Gastrocnemius medialis (tissue), 4 donors: ENCODE measurements at regions of chr6 and their contacts with region 1.

Region 1: DNA sequence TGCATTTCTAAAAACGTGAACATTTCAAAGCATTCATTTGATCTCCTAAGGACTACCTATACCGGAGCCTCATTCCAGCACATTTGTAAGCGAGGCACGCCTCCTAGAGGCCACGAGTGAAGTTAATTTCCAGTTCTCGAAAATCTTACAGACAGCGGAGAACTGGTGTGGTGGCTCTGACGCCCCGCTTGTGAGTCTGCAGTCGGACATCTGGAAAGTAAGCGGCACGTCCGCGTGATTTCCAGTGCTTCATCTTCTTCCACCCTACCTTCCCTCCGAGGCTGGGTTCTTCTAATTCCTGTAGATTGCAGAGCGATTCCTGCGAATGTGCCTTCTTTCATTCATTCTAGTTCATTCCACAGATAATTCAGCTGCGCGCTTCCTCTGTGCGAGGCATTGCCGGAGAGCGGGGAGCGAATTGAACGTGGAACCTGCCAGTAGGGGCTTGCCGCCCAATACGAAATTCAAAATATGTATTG is 810 bp upstream of the PRIM2 start:
- DNase-seq: peak; percentile 51 to 75
- ATAC-seq: peak; percentile 88 to 96
- H3K4me3 ChIP-seq: peak overlapping the region; percentile 54 to 79 (median 68)
- H3K27ac ChIP-seq: peak overlapping the region; percentile 49 to 80 (median 58)
- H3K4me1 ChIP-seq: peaks cover 14 to 21% of the 10 kb centered on the region in 2 donors
- H3K27me3 ChIP-seq: no peaks in the 10 kb centered on the region
- CTCF ChIP-seq: peak; percentile 67 to 79 (median 76)
- POLR2A ChIP-seq: no peak

Region 2: DNA sequence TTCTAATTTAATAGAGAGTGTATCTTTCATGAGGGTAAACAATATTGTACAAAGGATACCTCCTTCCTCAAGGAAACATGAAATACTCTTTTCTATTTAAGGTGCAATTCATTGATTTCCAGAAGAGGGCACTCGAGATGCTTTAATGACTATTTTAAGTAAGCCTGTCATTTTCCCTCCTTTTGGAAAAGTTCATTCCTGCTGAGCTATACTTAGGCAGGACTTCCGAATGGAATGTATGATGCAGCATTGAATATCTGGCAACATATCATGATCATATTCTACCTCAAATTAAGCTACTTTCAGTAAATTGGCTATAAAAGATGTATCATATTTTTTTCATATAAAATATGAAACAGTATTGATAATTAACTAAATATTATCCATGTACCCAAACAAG is 679.0 kb before region 1 on chr6:
- in situ Hi-C with region 1: no loop called
- intact Hi-C with region 1: loop called (anchors 10 kb)
- DNase-seq: no peak
- ATAC-seq: peak; percentile 53 to 82
- H3K4me3 ChIP-seq: no peak overlapping the region
- H3K27ac ChIP-seq: peak overlapping the region in 2 of 4 donors; percentile 12 to 27
- H3K4me1 ChIP-seq: peaks cover 0 to 7% of the 10 kb centered on the region in 2 donors
- H3K27me3 ChIP-seq: no peaks in the 10 kb centered on the region
- CTCF ChIP-seq: peak; percentile 64 to 85 (median 78)
- POLR2A ChIP-seq: no peak

Region 3: GRCh38 chr6:56955171-56956045 is 361.2 kb before region 1 on chr6:
- in situ Hi-C with region 1: no loop called
- intact Hi-C with region 1: loop called (anchors 2 kb)
- DNase-seq: peak; percentile 40 to 71
- ATAC-seq: peak; percentile 87 to 89
- H3K4me3 ChIP-seq: peak overlapping the region; percentile 41 to 80 (median 58)
- H3K27ac ChIP-seq: peak overlapping the region in 1 of 4 donors; percentile 28
- H3K4me1 ChIP-seq: peaks cover 8 to 15% of the 10 kb centered on the region in 2 donors
- H3K27me3 ChIP-seq: no peaks in the 10 kb centered on the region
- CTCF ChIP-seq: peak; percentile 39 to 75 (median 64)
- POLR2A ChIP-seq: no peak

Region 4: DNA sequence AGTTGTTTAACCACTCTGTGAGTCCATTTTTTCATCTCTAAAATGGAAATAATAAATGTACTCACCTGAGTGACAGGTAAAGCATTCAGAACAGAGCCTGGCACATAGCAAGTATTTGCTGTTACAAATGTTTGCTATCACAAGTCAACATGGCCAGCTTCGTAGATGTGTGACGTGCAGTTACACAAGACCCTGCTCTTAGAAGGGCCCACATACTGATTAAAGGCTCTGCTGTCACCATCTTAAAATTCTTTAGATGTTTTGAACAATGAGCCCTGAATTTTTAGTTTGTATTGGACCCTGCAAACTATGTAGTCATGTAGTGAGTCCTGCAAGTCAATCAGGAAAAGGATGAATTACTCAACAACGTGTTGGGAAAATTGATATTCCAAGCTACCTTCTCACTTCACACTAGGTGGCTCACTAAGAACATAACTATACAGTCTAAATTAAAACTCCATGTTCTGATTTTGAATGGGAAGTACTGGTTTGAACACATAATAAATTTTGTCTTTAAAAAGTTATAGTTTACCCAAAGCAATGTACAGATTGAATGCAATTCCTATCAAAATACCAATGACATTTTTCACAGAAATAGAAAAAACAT is 310.4 kb before region 1 on chr6:
- in situ Hi-C with region 1: no loop called
- intact Hi-C with region 1: no loop called
- DNase-seq: no peak
- ATAC-seq: no peak
- H3K4me3 ChIP-seq: no peak overlapping the region
- H3K27ac ChIP-seq: no peak overlapping the region
- H3K4me1 ChIP-seq: peaks cover 0 to 5% of the 10 kb centered on the region in 2 donors
- H3K27me3 ChIP-seq: no peaks in the 10 kb centered on the region
- CTCF ChIP-seq: no peak
- POLR2A ChIP-seq: no peak

Region 5: DNA sequence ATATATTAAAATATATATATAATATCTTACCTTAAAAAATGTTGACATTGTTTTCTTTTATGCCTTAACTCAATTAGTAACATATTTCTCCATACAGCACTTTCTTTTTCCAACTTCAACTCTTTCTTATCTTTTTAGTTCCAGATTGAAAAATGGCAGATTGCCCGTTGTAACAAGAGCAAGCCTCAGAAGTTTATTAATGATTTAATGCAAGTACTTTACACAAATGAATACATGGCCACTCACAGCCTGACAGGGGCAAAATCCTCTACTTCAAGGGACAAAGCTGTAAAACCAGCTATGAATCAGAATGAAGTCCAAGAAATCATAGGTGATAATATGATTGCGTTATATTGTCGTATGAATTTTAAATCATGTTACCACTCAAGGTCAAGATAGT is 299.6 kb before region 1 on chr6:
- in situ Hi-C with region 1: no loop called
- intact Hi-C with region 1: no loop called
- DNase-seq: no peak
- ATAC-seq: no peak
- H3K4me3 ChIP-seq: no peak overlapping the region
- H3K27ac ChIP-seq: no peak overlapping the region
- H3K4me1 ChIP-seq: no peaks in the 10 kb centered on the region
- H3K27me3 ChIP-seq: no peaks in the 10 kb centered on the region
- CTCF ChIP-seq: no peak
- POLR2A ChIP-seq: no peak

Region 6: DNA sequence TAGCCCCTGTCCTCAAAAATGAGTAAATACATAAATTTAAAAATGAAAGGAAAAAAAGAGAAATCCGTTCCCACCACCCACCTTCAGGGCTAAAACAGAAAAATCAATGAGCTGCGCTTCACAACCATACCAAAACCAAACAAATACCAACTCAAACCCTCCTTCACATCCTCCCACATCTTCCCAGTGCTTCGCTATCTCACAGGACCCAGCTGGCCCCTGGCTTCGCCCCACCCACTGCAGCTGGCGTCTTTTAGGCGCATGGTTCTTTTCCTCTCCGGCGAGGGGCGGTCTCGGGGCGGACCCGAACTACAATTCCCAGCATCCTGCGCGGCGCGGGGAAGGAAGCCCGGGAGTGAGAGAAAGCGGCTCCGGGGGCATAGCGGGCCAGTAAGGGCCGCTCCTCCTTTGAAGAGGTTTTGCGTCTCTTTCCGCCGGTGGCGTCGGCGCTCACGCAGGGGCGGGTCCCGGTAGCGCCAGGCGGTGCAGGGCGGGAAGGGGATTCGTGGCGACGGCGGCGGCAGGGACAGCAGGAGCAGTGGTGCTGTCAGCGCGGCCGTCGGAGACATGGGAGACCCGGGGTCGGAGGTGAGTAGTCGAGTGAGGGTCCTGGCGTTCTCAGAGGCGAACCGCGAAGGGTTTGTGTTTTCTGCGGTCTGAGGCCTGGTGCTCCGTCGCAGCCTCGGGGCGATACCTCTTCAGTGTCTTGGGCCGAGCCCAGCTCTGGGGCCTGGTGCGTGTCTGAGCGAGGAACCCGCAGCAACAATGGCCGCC is 226.7 kb before region 1 on chr6 and contains the start of gene ZNF451:
- in situ Hi-C with region 1: loop called in 2 of 4 experiments (anchors 25 kb)
- intact Hi-C with region 1: loop called (anchors 2 kb)
- DNase-seq: peak; percentile 96 to 97
- ATAC-seq: peak; percentile 96 to 97
- H3K4me3 ChIP-seq: peak within 1 kb of the TSS; percentile 61 to 77 (median 68)
- H3K27ac ChIP-seq: peak within 1 kb of the TSS; percentile 81 to 89 (median 86)
- H3K4me1 ChIP-seq: peaks cover 26 to 28% of the 10 kb centered on the region in 2 donors
- H3K27me3 ChIP-seq: no peaks in the 10 kb centered on the region
- CTCF ChIP-seq: peak in 3 of 5 experiments; percentile 11 to 15 (median 13)
- POLR2A ChIP-seq: peak; percentile 87 to 93
- total RNA-seq, gene ZNF451: 27.1 to 36.8 (median 28.0) TPM

Region 7: GRCh38 chr6:57190140-57190539 is 126.5 kb before region 1 on chr6:
- in situ Hi-C with region 1: loop called in 1 of 4 experiments (anchors 25 kb)
- intact Hi-C with region 1: no loop called
- DNase-seq: no peak
- ATAC-seq: no peak
- H3K4me3 ChIP-seq: no peak overlapping the region
- H3K27ac ChIP-seq: no peak overlapping the region
- H3K4me1 ChIP-seq: no peaks in the 10 kb centered on the region
- H3K27me3 ChIP-seq: no peaks in the 10 kb centered on the region
- CTCF ChIP-seq: peak in 1 of 5 experiments; percentile 32
- POLR2A ChIP-seq: no peak

Region 8: GRCh38 chr6:57267586-57268293 is 48.9 kb before region 1 on chr6:
- in situ Hi-C with region 1: no loop called
- intact Hi-C with region 1: loop called (anchors 5 kb)
- DNase-seq: no peak
- ATAC-seq: peak; percentile 75 to 87
- H3K4me3 ChIP-seq: no peak overlapping the region
- H3K27ac ChIP-seq: no peak overlapping the region
- H3K4me1 ChIP-seq: peaks cover 9 to 10% of the 10 kb centered on the region in 2 donors
- H3K27me3 ChIP-seq: no peaks in the 10 kb centered on the region
- CTCF ChIP-seq: no peak
- POLR2A ChIP-seq: no peak